Prostate gland (tissue), 2 donors: ENCODE measurements at regions of chr3 and their contacts with region 1.

Region 1: GRCh38 chr3:195442573-195443390 is at the start of gene ACAP2:
- DNase-seq: peak; percentile 100
- H3K4me3 ChIP-seq: peak within 1 kb of the TSS; percentile 90 to 91
- H3K27ac ChIP-seq: peak within 1 kb of the TSS; percentile 92
- H3K4me1 ChIP-seq: peaks cover 2% of the 10 kb centered on the region
- H3K27me3 ChIP-seq: no peaks in the 10 kb centered on the region
- CTCF ChIP-seq: no peak
- POLR2A ChIP-seq: peak; percentile 99
- total RNA-seq, gene ACAP2: 30.5 to 56.8 TPM

Region 2: DNA sequence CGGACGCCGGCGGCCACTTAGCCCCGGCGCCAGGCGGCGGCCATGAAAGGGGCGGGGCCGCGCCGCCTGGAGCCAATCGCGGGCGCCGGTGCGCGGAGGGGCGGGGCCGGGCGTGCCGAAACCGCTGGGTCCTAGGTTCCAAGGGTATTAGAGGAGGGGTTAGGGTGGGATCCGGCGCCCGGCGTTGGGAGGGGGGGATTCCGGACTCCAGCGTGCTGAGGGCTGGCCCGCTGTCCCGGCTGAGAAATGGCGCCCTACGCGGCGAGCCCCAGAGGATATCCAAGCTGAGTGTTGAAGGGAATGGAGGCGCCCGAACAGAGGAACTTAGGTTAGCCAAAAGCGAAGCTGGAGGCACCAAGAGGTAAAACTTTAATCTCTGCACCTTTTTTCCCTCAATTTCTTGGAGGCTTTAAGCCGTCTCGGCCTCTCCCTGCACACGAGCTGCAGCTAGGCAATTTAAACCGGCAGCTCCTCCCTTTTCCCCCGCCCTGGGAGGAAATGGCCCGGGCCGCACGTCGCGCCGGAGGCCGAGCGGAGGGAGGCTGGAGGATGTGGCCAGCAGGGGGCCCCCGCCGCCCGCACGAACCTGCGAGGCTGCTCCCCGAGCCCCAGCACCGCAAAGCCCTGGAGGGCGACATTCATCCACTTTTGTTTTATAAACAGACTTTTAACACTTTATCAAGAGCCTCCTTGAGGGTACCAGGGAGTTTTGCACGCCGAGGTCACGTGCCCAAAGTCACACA is 171.5 kb before region 1 on chr3 and contains the start of gene XXYLT1:
- intact Hi-C with region 1: loop called (anchors 5 kb)
- DNase-seq: peak; percentile 80
- H3K4me3 ChIP-seq: peak within 1 kb of the TSS; percentile 89 to 93
- H3K27ac ChIP-seq: peak within 1 kb of the TSS; percentile 72 to 79
- H3K4me1 ChIP-seq: peaks cover 6% of the 10 kb centered on the region
- H3K27me3 ChIP-seq: no peaks in the 10 kb centered on the region
- CTCF ChIP-seq: peak; percentile 85 to 97 (median 92)
- POLR2A ChIP-seq: no peak
- total RNA-seq, gene XXYLT1: 14.9 to 22.7 TPM

Region 3: GRCh38 chr3:195366200-195366925 is 76.4 kb before region 1 on chr3:
- intact Hi-C with region 1: no loop called
- DNase-seq: no peak
- H3K4me3 ChIP-seq: no peak overlapping the region
- H3K27ac ChIP-seq: no peak overlapping the region
- H3K4me1 ChIP-seq: no peaks in the 10 kb centered on the region
- H3K27me3 ChIP-seq: no peaks in the 10 kb centered on the region
- CTCF ChIP-seq: no peak
- POLR2A ChIP-seq: no peak

Region 4: DNA sequence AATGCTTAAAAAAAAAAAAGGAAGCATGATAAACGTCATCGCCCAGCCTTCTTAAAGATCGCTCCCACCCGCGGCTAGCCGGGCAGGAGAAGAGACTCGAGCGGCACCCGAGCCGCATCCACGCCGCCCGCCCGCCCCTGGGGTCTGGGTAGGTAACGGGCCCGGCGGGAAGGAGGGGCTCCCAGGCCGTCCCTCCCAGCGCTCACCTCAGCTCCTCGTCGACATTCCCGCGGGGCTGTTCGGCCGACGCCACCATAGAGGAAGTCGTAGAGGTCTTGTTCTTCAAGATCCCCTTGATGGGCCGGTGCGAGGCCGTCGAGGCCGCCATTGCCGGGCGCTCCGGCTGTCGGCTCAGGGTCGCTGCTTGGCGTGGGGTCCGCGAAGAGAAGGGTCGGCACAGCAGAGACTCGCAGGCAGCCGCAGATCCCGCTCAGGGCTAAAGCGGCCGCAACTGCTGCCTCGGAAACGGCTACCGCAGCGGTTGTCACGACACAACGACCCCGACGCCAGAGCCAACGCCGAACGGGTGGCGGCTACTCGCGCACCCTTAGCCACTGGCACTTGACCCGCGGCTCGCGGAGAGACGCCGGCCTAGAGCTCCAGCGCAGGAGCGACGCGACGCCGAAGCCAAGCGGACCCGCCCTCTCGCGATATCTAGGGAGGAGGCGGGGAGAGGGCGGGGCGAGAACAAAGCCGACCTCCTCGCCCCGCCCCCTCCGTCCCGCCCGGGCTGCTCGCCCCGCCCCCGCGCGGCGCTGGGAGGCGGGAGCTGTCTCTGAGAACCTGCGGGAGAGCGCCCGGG is 100.1 kb after region 1 on chr3 and contains the start of gene PPP1R2:
- intact Hi-C with region 1: loop called (anchors 10 kb)
- DNase-seq: peak; percentile 91
- H3K4me3 ChIP-seq: peak within 1 kb of the TSS; percentile 54 to 75
- H3K27ac ChIP-seq: peak within 1 kb of the TSS; percentile 86 to 89
- H3K4me1 ChIP-seq: peaks cover 6% of the 10 kb centered on the region
- H3K27me3 ChIP-seq: no peaks in the 10 kb centered on the region
- CTCF ChIP-seq: peak in 2 of 4 experiments; percentile 3 to 12
- POLR2A ChIP-seq: peak; percentile 96
- total RNA-seq, gene PPP1R2: 75.8 to 119 TPM